T-cell (primary cell): ENCODE measurements at regions of chr2 and their contacts with region 1.

Region 1: GRCh38 chr2:159152128-159152778 is 134.2 kb downstream of the WDSUB1 start:
- DNase-seq: no peak
- ATAC-seq: no peak
- H3K4me3 ChIP-seq: no peak overlapping the region
- H3K4me3 Mint-ChIP-seq: no peak overlapping the region
- H3K27ac ChIP-seq: no peak overlapping the region
- H3K27ac Mint-ChIP-seq: no peak overlapping the region
- H3K4me1 ChIP-seq: peaks cover 20 to 24% of the 10 kb centered on the region in 2 experiments
- H3K4me1 Mint-ChIP-seq: peaks cover 19 to 47% (median 30%) of the 10 kb centered on the region in 3 donors
- H3K27me3 ChIP-seq: peaks cover 0 to 7% of the 10 kb centered on the region in 2 experiments
- H3K27me3 Mint-ChIP-seq: peaks cover 0 to 4% of the 10 kb centered on the region in 2 donors

Region 2: GRCh38 chr2:159168707-159169106 is 16.5 kb after region 1 on chr2:
- CTCF ChIA-PET with region 1: no interaction called
- POLR2A ChIA-PET with region 1: no interaction called
- DNase-seq: no peak
- ATAC-seq: no peak
- H3K4me3 ChIP-seq: no peak overlapping the region
- H3K4me3 Mint-ChIP-seq: no peak overlapping the region
- H3K27ac ChIP-seq: no peak overlapping the region
- H3K27ac Mint-ChIP-seq: no peak overlapping the region
- H3K4me1 ChIP-seq: no peaks in the 10 kb centered on the region
- H3K4me1 Mint-ChIP-seq: peaks cover 0 to 4% (median 0%) of the 10 kb centered on the region in 3 donors
- H3K27me3 ChIP-seq: no peaks in the 10 kb centered on the region
- H3K27me3 Mint-ChIP-seq: no peaks in the 10 kb centered on the region

Region 3: DNA sequence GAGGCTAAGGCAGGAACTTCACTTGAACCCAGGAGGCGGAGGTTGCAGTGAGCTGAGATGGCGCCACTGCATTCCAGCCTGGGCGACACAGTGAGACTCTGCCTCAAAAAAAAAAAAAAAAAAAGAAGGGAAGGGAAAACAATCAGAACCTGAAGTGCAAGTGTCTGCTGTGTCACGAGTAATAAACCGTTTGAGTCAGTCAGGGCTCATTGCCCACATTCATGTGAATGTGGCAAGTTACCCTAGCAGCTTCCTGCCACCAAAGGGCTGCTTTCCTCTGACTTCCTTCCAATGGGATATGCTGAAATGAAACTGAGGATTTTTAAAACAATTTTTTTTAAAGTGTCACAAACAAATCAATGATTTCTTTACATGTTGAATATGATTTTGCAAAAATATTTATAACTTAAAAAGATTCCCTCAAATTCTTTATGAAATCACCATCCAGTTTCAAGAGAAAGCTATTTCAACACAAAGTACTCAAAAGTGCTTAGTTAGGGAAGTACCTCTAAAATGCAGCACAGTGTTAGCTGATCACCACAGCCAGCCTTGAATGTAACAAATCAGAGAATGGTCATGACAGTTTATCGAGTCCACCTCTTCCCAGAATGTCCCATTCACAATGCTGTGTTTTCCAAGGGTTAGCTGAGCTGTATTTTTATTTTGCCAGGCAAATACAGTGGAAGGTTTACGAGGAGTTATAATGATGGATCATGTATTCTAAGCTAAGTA is 97.9 kb after region 1 on chr2:
- CTCF ChIA-PET with region 1: no interaction called
- POLR2A ChIA-PET with region 1: interaction called in 1 of 2 experiments, 10 read pairs
- DNase-seq: no peak
- ATAC-seq: no peak
- H3K4me3 ChIP-seq: no peak overlapping the region
- H3K4me3 Mint-ChIP-seq: no peak overlapping the region
- H3K27ac ChIP-seq: no peak overlapping the region
- H3K27ac Mint-ChIP-seq: no peak overlapping the region
- H3K4me1 ChIP-seq: no peaks in the 10 kb centered on the region
- H3K4me1 Mint-ChIP-seq: peaks cover 0 to 3% (median 2%) of the 10 kb centered on the region in 3 donors
- H3K27me3 ChIP-seq: no peaks in the 10 kb centered on the region
- H3K27me3 Mint-ChIP-seq: no peaks in the 10 kb centered on the region